T-cell (primary cell): ENCODE measurements at regions of chr4 and their contacts with region 1.

Region 1: DNA sequence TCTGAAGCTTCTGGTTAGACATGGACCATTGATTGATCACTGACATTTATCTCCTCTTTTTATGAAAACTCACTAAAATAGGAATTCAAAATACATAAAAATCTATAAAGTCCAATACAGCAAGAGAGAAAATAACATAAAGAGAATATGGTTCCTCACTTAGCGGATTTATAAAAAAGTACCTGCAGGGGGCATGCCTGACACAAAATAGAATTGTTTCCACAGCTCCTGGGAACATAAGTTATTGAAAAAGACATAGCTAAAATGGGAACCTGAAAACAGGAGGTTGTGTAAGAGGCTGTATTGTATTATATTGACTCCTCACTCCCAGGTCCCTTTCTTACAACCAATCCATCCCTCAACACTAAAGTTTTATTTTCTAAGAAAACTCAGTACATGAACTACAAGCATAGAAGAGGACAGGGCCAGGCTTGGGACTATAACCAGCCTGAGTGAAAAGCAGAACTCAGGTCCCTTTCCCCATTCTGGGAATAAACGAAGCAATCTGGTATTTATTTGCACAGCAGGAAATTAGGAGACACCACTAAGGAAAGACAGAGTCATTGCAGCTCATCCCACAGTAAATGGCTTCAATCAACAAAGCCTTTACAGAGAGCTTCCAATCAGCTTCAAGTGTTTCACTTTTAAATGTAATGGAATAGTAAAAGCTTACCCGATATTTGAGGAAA is 121.1 kb upstream of the NDST4 start:
- DNase-seq: peak in 1 of 35 experiments; percentile 20
- ATAC-seq: no peak
- H3K4me3 ChIP-seq: no peak overlapping the region
- H3K4me3 Mint-ChIP-seq: no peak overlapping the region
- H3K27ac ChIP-seq: no peak overlapping the region
- H3K27ac Mint-ChIP-seq: no peak overlapping the region
- H3K4me1 ChIP-seq: no peaks in the 10 kb centered on the region
- H3K4me1 Mint-ChIP-seq: peaks cover 0 to 3% (median 0%) of the 10 kb centered on the region in 3 donors
- H3K27me3 ChIP-seq: no peaks in the 10 kb centered on the region
- H3K27me3 Mint-ChIP-seq: no peaks in the 10 kb centered on the region

Region 2: GRCh38 chr4:115537387-115537786 is 302.8 kb after region 1 on chr4:
- CTCF ChIA-PET with region 1: interaction called in 1 of 2 experiments, 14 read pairs
- POLR2A ChIA-PET with region 1: no interaction called
- DNase-seq: no peak
- ATAC-seq: no peak
- H3K4me3 ChIP-seq: no peak overlapping the region
- H3K4me3 Mint-ChIP-seq: no peak overlapping the region
- H3K27ac ChIP-seq: no peak overlapping the region
- H3K27ac Mint-ChIP-seq: no peak overlapping the region
- H3K4me1 ChIP-seq: no peaks in the 10 kb centered on the region
- H3K4me1 Mint-ChIP-seq: no peaks in the 10 kb centered on the region
- H3K27me3 ChIP-seq: no peaks in the 10 kb centered on the region
- H3K27me3 Mint-ChIP-seq: no peaks in the 10 kb centered on the region